Transverse colon (tissue), 4 donors: ENCODE measurements at regions of chr2 and their contacts with region 1.

Region 1: GRCh38 chr2:11710234-11710975 is 36.0 kb upstream of the LPIN1 start:
- DNase-seq: no peak
- H3K4me3 ChIP-seq: no peak overlapping the region
- H3K27ac ChIP-seq: peak overlapping the region in 2 of 4 donors; percentile 21 to 43
- H3K4me1 ChIP-seq: peaks cover 0 to 8% (median 0%) of the 10 kb centered on the region in 4 donors
- H3K27me3 ChIP-seq: no peaks in the 10 kb centered on the region
- CTCF ChIP-seq: no peak
- EP300 ChIP-seq: no peak
- POLR2A ChIP-seq: no peak

Region 2: DNA sequence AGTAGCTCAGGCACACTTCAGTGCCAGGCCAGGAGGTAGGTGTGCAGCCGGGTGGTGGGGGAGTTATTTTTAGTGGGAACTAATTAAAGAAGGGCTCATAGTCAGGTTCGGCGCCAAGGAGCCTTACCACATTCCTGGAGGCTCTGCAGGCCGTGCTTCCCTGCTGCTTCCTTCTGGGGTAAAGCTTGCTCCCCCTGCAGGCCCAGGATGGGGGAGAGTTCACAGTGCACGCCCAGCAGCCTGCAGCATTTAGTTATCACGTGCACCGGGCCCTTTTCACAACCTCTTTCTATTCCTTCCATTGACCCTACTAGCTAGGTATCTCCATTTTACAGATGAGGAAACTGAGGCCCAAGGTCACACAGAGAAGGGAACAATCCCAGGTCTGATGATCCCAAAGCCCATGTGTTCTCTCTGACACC is 796.1 kb before region 1 on chr2:
- in situ Hi-C with region 1: no loop called
- intact Hi-C with region 1: no loop called
- DNase-seq: peak; percentile 31
- H3K4me3 ChIP-seq: no peak overlapping the region
- H3K27ac ChIP-seq: no peak overlapping the region
- H3K4me1 ChIP-seq: peaks cover 0 to 10% (median 7%) of the 10 kb centered on the region in 4 donors
- H3K27me3 ChIP-seq: peaks cover 49% of the 10 kb centered on the region
- CTCF ChIP-seq: peak in 4 of 5 experiments; percentile 18 to 36 (median 28)
- EP300 ChIP-seq: no peak
- POLR2A ChIP-seq: no peak

Region 3: GRCh38 chr2:10982931-10983701 is 727.3 kb before region 1 on chr2:
- in situ Hi-C with region 1: no loop called
- intact Hi-C with region 1: loop called (anchors 5 kb)
- DNase-seq: peak; percentile 25
- H3K4me3 ChIP-seq: no peak overlapping the region
- H3K27ac ChIP-seq: peak overlapping the region; percentile 46 to 67 (median 62)
- H3K4me1 ChIP-seq: no peaks in the 10 kb centered on the region
- H3K27me3 ChIP-seq: peaks cover 5% of the 10 kb centered on the region
- CTCF ChIP-seq: no peak
- EP300 ChIP-seq: no peak
- POLR2A ChIP-seq: no peak

Region 4: DNA sequence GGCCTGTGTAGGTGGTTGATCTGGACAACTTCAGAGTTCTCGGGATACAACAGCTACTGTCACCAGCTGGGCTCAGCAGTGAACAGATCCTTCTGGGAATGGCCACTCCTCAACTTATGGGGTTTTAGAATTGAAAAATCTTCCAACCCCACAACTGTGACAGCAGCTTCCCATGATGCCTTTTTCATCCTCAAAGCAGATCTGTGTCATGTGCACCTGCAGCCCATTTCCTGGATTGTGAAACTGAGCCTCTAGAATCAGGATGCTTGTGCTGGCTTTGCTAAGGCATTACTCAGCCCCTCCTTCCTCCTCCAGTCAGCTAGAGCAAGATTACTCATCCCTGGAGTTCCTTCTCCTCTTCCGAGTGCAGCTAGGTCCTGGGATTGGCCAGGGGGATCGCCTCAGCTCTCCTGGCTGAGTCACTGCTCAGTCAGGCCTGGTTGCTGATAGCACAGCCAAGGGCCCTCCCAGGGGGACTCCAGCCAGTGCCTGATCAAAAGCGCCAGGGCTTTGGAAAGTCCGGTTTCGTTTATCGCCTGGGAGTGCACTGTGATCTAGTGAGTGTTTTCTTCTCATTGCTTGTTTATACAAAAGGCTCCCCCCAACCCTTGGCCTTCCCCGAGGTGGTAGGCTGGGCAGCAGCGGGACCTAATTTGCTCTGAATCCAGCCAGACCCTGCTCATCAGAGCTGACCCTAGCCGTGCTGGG is 33.6 kb after region 1 on chr2:
- in situ Hi-C with region 1: no loop called
- intact Hi-C with region 1: no loop called
- DNase-seq: peak; percentile 95
- H3K4me3 ChIP-seq: no peak overlapping the region
- H3K27ac ChIP-seq: peak overlapping the region; percentile 72 to 85 (median 75)
- H3K4me1 ChIP-seq: peaks cover 10 to 47% (median 36%) of the 10 kb centered on the region in 4 donors
- H3K27me3 ChIP-seq: no peaks in the 10 kb centered on the region
- CTCF ChIP-seq: no peak
- EP300 ChIP-seq: no peak
- POLR2A ChIP-seq: no peak